ENCODE measurements at regions of chr1 and their contacts with region 1.

Region 1: GRCh38 chr1:93607814-93608186 is 73.8 kb downstream of the BCAR3 start:
- DNase-seq: no peak
- ATAC-seq: peak; percentile 91
- H3K4me3 Mint-ChIP-seq: peak overlapping the region; percentile 62
- H3K27ac Mint-ChIP-seq: peak overlapping the region; percentile 87
- H3K4me1 Mint-ChIP-seq: peaks cover 69% of the 10 kb centered on the region
- H3K27me3 Mint-ChIP-seq: no peaks in the 10 kb centered on the region
- CTCF ChIP-seq: no peak

Region 2: GRCh38 chr1:93519196-93519827 is 88.5 kb before region 1 on chr1:
- CTCF ChIA-PET with region 1: no interaction called
- POLR2A ChIA-PET with region 1: no interaction called
- intact Hi-C with region 1: no loop called
- DNase-seq: no peak
- ATAC-seq: no peak
- H3K4me3 Mint-ChIP-seq: no peak overlapping the region
- H3K27ac Mint-ChIP-seq: no peak overlapping the region
- H3K4me1 Mint-ChIP-seq: no peaks in the 10 kb centered on the region
- H3K27me3 Mint-ChIP-seq: no peaks in the 10 kb centered on the region
- CTCF ChIP-seq: no peak

Region 3: GRCh38 chr1:93591676-93592550 is 15.9 kb before region 1 on chr1:
- CTCF ChIA-PET with region 1: no interaction called
- POLR2A ChIA-PET with region 1: interaction called, 6 read pairs
- intact Hi-C with region 1: loop called (anchors 1 kb)
- DNase-seq: peak; percentile 26
- ATAC-seq: peak; percentile 70
- H3K4me3 Mint-ChIP-seq: peak overlapping the region; percentile 45
- H3K27ac Mint-ChIP-seq: peak overlapping the region; percentile 77
- H3K4me1 Mint-ChIP-seq: peaks cover 25% of the 10 kb centered on the region
- H3K27me3 Mint-ChIP-seq: no peaks in the 10 kb centered on the region
- CTCF ChIP-seq: no peak

Region 4: GRCh38 chr1:93638981-93639380 is 31.2 kb after region 1 on chr1:
- CTCF ChIA-PET with region 1: interaction called, 3 read pairs
- POLR2A ChIA-PET with region 1: interaction called, 3 read pairs
- intact Hi-C with region 1: loop called (anchors 1 kb)
- DNase-seq: no peak
- ATAC-seq: no peak
- H3K4me3 Mint-ChIP-seq: no peak overlapping the region
- H3K27ac Mint-ChIP-seq: no peak overlapping the region
- H3K4me1 Mint-ChIP-seq: peaks cover 31% of the 10 kb centered on the region
- H3K27me3 Mint-ChIP-seq: no peaks in the 10 kb centered on the region
- CTCF ChIP-seq: no peak

Region 5: GRCh38 chr1:93708734-93709481 is 101.1 kb after region 1 on chr1:
- CTCF ChIA-PET with region 1: no interaction called
- POLR2A ChIA-PET with region 1: interaction called, 3 read pairs
- intact Hi-C with region 1: loop called (anchors 1 kb)
- DNase-seq: no peak
- ATAC-seq: no peak
- H3K4me3 Mint-ChIP-seq: peak overlapping the region; percentile 72
- H3K27ac Mint-ChIP-seq: peak overlapping the region; percentile 90
- H3K4me1 Mint-ChIP-seq: peaks cover 68% of the 10 kb centered on the region
- H3K27me3 Mint-ChIP-seq: no peaks in the 10 kb centered on the region
- CTCF ChIP-seq: no peak

Measured in activated B cell treated with CpG ODN at 0.5 μM for 24 hours (primary cell).